ENCODE measurements at regions of chr3 and their contacts with region 1.

Region 1: GRCh38 chr3:104279617-104280016 is 1087.1 kb upstream of the ALCAM start:
- DNase-seq: peak; percentile 26
- H3K4me3 ChIP-seq: peak overlapping the region in 1 of 3 experiments; percentile 36
- H3K27ac ChIP-seq: no peak overlapping the region
- H3K4me1 ChIP-seq: no peaks in the 10 kb centered on the region
- H3K27me3 ChIP-seq: no peaks in the 10 kb centered on the region
- CTCF ChIP-seq: no peak
- POLR2A ChIP-seq: no peak

Region 2: DNA sequence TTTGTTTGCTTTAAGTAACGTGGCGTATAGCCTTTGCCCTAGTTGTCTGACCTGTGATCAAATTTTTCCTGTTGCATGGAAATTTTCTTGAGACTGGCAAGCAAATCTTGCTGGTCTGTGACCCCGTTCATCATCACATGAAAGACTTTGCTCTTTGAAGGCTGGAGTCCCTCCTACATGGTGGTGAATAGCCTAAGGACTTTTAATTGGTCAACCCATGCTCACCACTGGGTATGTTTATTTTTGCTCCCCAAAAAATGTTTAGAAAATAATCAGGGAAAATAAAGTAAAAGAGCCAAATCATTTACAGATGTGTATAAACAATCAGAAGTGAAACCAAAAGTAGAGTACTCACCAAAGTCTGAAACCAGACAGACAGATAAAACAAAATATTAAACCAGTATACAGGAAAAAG is 11.8 kb after region 1 on chr3:
- CTCF ChIA-PET with region 1: interaction called, 15 read pairs
- POLR2A ChIA-PET with region 1: no interaction called
- dilution Hi-C with region 1: no loop called
- intact Hi-C with region 1: no loop called
- DNase-seq: peak; percentile 18
- H3K4me3 ChIP-seq: no peak overlapping the region
- H3K27ac ChIP-seq: no peak overlapping the region
- H3K4me1 ChIP-seq: no peaks in the 10 kb centered on the region
- H3K27me3 ChIP-seq: no peaks in the 10 kb centered on the region
- CTCF ChIP-seq: no peak
- POLR2A ChIP-seq: no peak

Region 3: GRCh38 chr3:104510131-104510849 is 230.7 kb after region 1 on chr3:
- CTCF ChIA-PET with region 1: no interaction called
- POLR2A ChIA-PET with region 1: no interaction called
- dilution Hi-C with region 1: no loop called
- intact Hi-C with region 1: no loop called
- DNase-seq: no peak
- H3K4me3 ChIP-seq: no peak overlapping the region
- H3K27ac ChIP-seq: no peak overlapping the region
- H3K4me1 ChIP-seq: no peaks in the 10 kb centered on the region
- H3K27me3 ChIP-seq: no peaks in the 10 kb centered on the region
- CTCF ChIP-seq: no peak
- POLR2A ChIP-seq: no peak